Activated naive CD4-positive, alpha-beta T cell treated with anti-CD3 and anti-CD28 coated beads for 36 hours (primary cell): ENCODE measurements at regions of chr3 and their contacts with region 1.

Region 1: GRCh38 chr3:42749753-42750231 is 23.3 kb downstream of the CCDC13 start:
- DNase-seq: peak; percentile 29
- H3K4me3 Mint-ChIP-seq: no peak overlapping the region
- H3K27ac Mint-ChIP-seq: no peak overlapping the region
- H3K4me1 Mint-ChIP-seq: peaks cover 26% of the 10 kb centered on the region
- H3K27me3 Mint-ChIP-seq: no peaks in the 10 kb centered on the region

Region 2: GRCh38 chr3:42660893-42661292 is 88.9 kb before region 1 on chr3:
- CTCF ChIA-PET with region 1: no interaction called
- intact Hi-C with region 1: loop called (anchors 1 kb)
- DNase-seq: no peak
- H3K4me3 Mint-ChIP-seq: no peak overlapping the region
- H3K27ac Mint-ChIP-seq: no peak overlapping the region
- H3K4me1 Mint-ChIP-seq: no peaks in the 10 kb centered on the region
- H3K27me3 Mint-ChIP-seq: no peaks in the 10 kb centered on the region